B cell (primary cell): ENCODE measurements at regions of chr17 and their contacts with region 1.

Region 1: GRCh38 chr17:69327060-69327831 is at the start of gene ABCA5:
- DNase-seq: peak; percentile 95
- ATAC-seq: peak; percentile 93
- H3K4me3 ChIP-seq: peak within 1 kb of the TSS; percentile 39 to 88 (median 80)
- H3K4me3 Mint-ChIP-seq: peak within 1 kb of the TSS; percentile 96
- H3K27ac ChIP-seq: peak within 1 kb of the TSS; percentile 86 to 90
- H3K27ac Mint-ChIP-seq: peak within 1 kb of the TSS; percentile 98
- H3K4me1 ChIP-seq: peaks cover 7 to 12% of the 10 kb centered on the region in 2 donors
- H3K4me1 Mint-ChIP-seq: peaks cover 17% of the 10 kb centered on the region
- H3K27me3 ChIP-seq: peaks cover 0 to 11% (median 1%) of the 10 kb centered on the region in 4 experiments
- H3K27me3 Mint-ChIP-seq: peaks cover 12% of the 10 kb centered on the region
- CTCF ChIP-seq: no peak
- total RNA-seq, gene ABCA5: 37.2 and 37.8 TPM in 2 replicates

Region 2: GRCh38 chr17:68512247-68512982 is 814.8 kb before region 1 on chr17 and contains the start of gene PRKAR1A:
- CTCF ChIA-PET with region 1: no interaction called
- POLR2A ChIA-PET with region 1: no interaction called
- intact Hi-C with region 1: loop called (anchors 5 kb)
- DNase-seq: peak; percentile 98
- ATAC-seq: peak; percentile 75
- H3K4me3 ChIP-seq: peak within 1 kb of the TSS; percentile 62 to 99 (median 85)
- H3K4me3 Mint-ChIP-seq: peak within 1 kb of the TSS; percentile 100
- H3K27ac ChIP-seq: peak within 1 kb of the TSS; percentile 99
- H3K27ac Mint-ChIP-seq: peak within 1 kb of the TSS; percentile 100
- H3K4me1 ChIP-seq: peaks cover 25 to 28% of the 10 kb centered on the region in 2 donors
- H3K4me1 Mint-ChIP-seq: peaks cover 42% of the 10 kb centered on the region
- H3K27me3 ChIP-seq: no peaks in the 10 kb centered on the region
- H3K27me3 Mint-ChIP-seq: no peaks in the 10 kb centered on the region
- CTCF ChIP-seq: no peak
- total RNA-seq, gene PRKAR1A: 296 and 297 TPM in 2 replicates

Region 3: DNA sequence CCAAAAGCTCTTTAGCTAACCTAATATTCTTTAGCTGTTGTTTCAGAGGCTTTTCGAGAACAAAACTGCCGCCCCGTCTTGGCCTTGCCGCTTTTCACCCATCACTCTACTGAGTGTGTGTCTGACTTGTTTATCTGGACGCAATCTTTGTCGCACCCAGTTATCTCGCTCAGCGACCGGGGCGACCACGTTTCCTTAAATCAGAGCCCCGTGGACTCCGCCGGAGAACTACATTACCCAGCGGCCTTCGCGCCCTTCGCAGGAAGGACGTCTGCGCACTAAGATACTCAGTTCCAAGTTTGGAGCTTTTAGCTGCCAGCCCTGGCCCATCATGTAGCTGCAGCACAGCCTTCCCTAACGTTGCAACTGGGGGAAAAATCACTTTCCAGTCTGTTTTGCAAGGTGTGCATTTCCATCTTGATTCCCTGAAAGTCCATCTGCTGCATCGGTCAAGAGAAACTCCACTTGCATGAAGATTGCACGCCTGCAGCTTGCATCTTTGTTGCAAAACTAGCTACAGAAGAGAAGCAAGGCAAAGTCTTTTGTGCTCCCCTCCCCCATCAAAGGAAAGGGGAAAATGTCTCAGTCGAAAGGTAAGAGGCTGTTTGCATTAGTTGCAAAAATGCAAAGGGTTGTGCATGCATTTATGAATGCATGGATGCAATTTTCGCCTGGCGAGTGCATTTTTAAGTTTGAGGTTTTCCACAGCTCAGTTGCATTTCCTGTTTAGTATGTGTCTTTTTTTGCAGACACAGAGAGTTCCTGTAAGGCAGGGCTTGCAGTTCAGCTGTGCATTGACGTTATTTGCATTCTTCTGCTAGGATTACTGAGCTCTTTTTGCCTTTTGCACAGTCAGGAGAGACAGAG is 87.4 kb after region 1 on chr17 and contains the start of gene MAP2K6:
- CTCF ChIA-PET with region 1: interaction called, 3 read pairs
- POLR2A ChIA-PET with region 1: no interaction called
- intact Hi-C with region 1: loop called (anchors 1 kb)
- DNase-seq: peak; percentile 83
- ATAC-seq: peak; percentile 99
- H3K4me3 ChIP-seq: peak within 1 kb of the TSS; percentile 56 to 90 (median 73)
- H3K4me3 Mint-ChIP-seq: no peak within 1 kb of the TSS
- H3K27ac ChIP-seq: no peak within 1 kb of the TSS
- H3K27ac Mint-ChIP-seq: no peak within 1 kb of the TSS
- H3K4me1 ChIP-seq: peaks cover 14 to 18% of the 10 kb centered on the region in 2 donors
- H3K4me1 Mint-ChIP-seq: no peaks in the 10 kb centered on the region
- H3K27me3 ChIP-seq: no peaks in the 10 kb centered on the region
- H3K27me3 Mint-ChIP-seq: no peaks in the 10 kb centered on the region
- CTCF ChIP-seq: no peak
- total RNA-seq, gene MAP2K6: 7.7 TPM in 2 replicates

Region 4: DNA sequence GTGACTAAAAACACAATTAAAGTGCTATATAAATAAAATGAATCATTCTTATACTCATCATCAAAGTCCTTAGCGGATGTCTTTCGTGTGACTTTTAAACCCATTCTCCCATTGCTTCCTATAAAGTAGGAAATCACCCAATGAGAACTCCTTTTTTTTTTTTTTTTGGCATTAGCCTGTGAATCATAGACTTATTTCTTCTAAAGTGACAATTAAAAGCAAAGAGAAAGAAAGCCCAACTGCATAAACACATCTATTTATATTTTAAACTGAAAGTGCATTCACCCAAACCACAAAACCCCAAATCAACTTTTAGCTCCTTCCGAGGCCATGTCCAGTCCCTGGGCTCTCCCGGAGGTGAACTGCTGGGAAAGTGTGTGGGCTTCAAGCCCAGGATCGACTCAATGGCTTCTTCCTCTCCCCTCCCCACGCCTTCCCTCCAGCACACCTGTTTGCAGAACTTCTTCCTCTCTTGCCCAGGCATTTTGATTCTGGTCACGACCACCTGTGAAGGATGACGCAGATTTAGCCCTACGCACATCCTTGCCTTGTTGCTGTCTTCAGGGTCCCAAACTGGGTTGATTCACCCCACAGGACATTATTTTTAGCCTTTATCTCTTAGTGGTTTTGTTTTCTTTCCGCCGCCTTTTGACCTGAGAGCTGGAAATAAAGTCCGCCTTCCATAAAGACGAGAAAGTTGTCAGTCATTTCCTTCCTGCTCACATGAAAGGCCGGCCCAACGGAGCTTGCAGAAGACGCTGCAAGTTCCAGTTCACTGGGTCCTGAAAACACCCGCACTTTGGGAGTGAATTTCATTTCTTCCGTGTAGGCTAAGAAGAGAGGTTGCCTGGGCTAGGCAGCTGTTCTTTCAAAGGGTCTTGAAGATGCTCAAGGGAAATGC is 254.1 kb after region 1 on chr17:
- CTCF ChIA-PET with region 1: interaction called, 3 read pairs
- POLR2A ChIA-PET with region 1: no interaction called
- intact Hi-C with region 1: loop called (anchors 1 kb)
- DNase-seq: peak; percentile 88
- ATAC-seq: peak; percentile 89
- H3K4me3 ChIP-seq: peak overlapping the region; percentile 32 to 70 (median 51)
- H3K4me3 Mint-ChIP-seq: peak overlapping the region; percentile 82
- H3K27ac ChIP-seq: peak overlapping the region; percentile 49 to 69
- H3K27ac Mint-ChIP-seq: peak overlapping the region; percentile 93
- H3K4me1 ChIP-seq: peaks cover 18% of the 10 kb centered on the region in 2 donors
- H3K4me1 Mint-ChIP-seq: peaks cover 41% of the 10 kb centered on the region
- H3K27me3 ChIP-seq: no peaks in the 10 kb centered on the region
- H3K27me3 Mint-ChIP-seq: peaks cover 6% of the 10 kb centered on the region
- CTCF ChIP-seq: no peak

Region 5: GRCh38 chr17:69802039-69802740 is 474.9 kb after region 1 on chr17:
- CTCF ChIA-PET with region 1: no interaction called
- POLR2A ChIA-PET with region 1: no interaction called
- intact Hi-C with region 1: no loop called
- DNase-seq: no peak
- ATAC-seq: no peak
- H3K4me3 ChIP-seq: no peak overlapping the region
- H3K4me3 Mint-ChIP-seq: no peak overlapping the region
- H3K27ac ChIP-seq: no peak overlapping the region
- H3K27ac Mint-ChIP-seq: no peak overlapping the region
- H3K4me1 ChIP-seq: no peaks in the 10 kb centered on the region
- H3K4me1 Mint-ChIP-seq: no peaks in the 10 kb centered on the region
- H3K27me3 ChIP-seq: no peaks in the 10 kb centered on the region
- H3K27me3 Mint-ChIP-seq: no peaks in the 10 kb centered on the region
- CTCF ChIP-seq: no peak